Activated CD8-positive, alpha-beta T cell treated with anti-CD3 and anti-CD28 coated beads for 36 hours (primary cell): ENCODE measurements at regions of chr19 and their contacts with region 1.

Region 1: GRCh38 chr19:34336781-34337271 is 28.2 kb upstream of the GPI start:
- DNase-seq: peak; percentile 70
- ATAC-seq: peak; percentile 65
- H3K4me3 Mint-ChIP-seq: no peak overlapping the region
- H3K27ac Mint-ChIP-seq: peak overlapping the region; percentile 60
- H3K4me1 Mint-ChIP-seq: peaks cover 6% of the 10 kb centered on the region
- H3K27me3 Mint-ChIP-seq: no peaks in the 10 kb centered on the region
- CTCF ChIP-seq: peak; percentile 93

Region 2: DNA sequence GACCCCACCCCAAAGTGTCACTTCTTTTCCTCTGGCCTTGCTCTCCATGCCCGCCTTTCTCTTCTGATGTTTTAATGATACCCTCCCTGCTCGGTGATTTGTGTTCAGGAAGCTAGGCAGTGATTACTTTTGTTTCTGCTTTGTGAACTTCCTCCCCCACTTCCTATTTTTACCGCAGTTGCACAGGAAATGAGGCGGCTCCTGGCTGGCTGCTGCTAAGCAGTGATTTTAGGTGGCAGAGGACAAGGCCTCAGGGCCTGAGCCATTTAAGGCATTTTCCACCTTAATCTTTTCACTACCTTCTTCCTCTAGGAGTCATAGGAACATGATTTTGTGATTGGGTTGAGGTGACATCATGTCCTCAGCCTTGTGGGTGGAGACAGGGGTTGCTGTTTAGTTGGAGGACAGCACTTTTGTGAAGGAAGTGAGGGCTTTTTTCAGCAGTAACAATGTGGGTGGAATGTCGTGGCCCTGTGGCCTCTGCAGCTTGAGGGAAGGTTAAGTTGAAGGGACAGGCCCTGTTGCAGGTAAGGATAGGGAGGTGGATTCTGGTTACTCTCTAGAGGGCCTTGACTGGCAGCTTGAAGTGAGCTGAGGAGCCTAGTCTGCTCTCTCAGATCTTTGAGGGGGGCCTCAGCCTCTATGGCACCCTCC is 66.7 kb before region 1 on chr19:
- CTCF ChIA-PET with region 1: interaction called, 14 read pairs
- POLR2A ChIA-PET with region 1: no interaction called
- intact Hi-C with region 1: no loop called
- DNase-seq: peak; percentile 77
- ATAC-seq: peak; percentile 90
- H3K4me3 Mint-ChIP-seq: peak overlapping the region; percentile 45
- H3K27ac Mint-ChIP-seq: peak overlapping the region; percentile 88
- H3K4me1 Mint-ChIP-seq: peaks cover 54% of the 10 kb centered on the region
- H3K27me3 Mint-ChIP-seq: no peaks in the 10 kb centered on the region
- CTCF ChIP-seq: no peak